CD8-positive, alpha-beta T cell (primary cell): ENCODE measurements at regions of chr19 and their contacts with region 1.

Region 1: GRCh38 chr19:23686621-23687423 is at the start of gene ZNF675:
- DNase-seq: peak; percentile 73 to 95 (median 89)
- ATAC-seq: peak; percentile 92
- H3K4me3 ChIP-seq: peak within 1 kb of the TSS; percentile 76 to 99
- H3K4me3 Mint-ChIP-seq: peak within 1 kb of the TSS; percentile 99
- H3K27ac ChIP-seq: peak within 1 kb of the TSS; percentile 90 to 93
- H3K27ac Mint-ChIP-seq: peak within 1 kb of the TSS; percentile 98
- H3K4me1 ChIP-seq: peaks cover 20% of the 10 kb centered on the region
- H3K4me1 Mint-ChIP-seq: peaks cover 52% of the 10 kb centered on the region
- H3K27me3 ChIP-seq: no peaks in the 10 kb centered on the region
- H3K27me3 Mint-ChIP-seq: no peaks in the 10 kb centered on the region
- CTCF ChIP-seq: no peak
- total RNA-seq, gene ZNF675: 19.5 to 20.5 TPM

Region 2: DNA sequence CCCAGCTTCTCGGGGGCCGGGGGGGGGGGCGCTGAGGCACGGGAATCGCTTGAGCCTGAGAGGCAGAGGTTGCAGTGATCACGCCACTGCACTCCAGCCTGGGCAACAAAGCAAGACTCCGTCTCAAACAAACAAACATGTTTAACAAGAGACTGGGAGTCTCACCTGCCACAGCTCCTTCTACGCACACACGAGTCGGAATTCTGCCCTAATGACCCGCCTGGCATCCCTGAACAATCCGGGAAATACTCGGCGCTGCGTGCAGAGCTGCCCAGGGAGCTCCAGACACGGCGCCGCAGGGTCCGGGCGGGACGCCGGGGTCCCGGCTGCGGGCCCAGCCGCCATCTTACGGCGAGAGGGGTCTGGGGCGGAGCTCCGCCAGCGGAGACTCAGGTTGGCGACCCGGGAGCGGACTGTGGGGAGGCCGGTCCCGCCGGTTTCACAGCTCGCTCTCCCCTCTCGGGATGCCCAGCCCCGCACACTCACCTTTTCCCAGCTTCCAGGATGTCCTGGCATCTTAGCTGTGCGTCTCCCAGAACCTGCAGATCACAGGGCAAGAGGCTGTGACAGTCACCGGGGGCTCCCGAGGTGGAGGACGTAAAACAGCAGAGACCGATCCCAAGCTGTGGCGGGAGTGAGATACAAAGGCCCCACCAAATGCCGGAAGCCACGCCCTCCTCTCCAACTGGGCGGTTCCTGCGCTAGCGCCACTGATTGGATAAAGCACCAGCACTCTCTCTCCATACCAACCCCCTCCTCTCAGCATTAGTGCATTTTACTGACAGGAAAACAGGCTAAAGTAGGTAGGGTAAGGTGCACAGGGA is 413.0 kb before region 1 on chr19:
- CTCF ChIA-PET with region 1: no interaction called
- POLR2A ChIA-PET with region 1: interaction called, 6 read pairs
- intact Hi-C with region 1: loop called (anchors 1 to 5 kb)
- DNase-seq: peak; percentile 80 to 95 (median 92)
- ATAC-seq: peak; percentile 98
- H3K4me3 ChIP-seq: peak overlapping the region; percentile 80 to 95
- H3K4me3 Mint-ChIP-seq: peak overlapping the region; percentile 98
- H3K27ac ChIP-seq: peak overlapping the region; percentile 78 to 83
- H3K27ac Mint-ChIP-seq: peak overlapping the region; percentile 97
- H3K4me1 ChIP-seq: peaks cover 8% of the 10 kb centered on the region
- H3K4me1 Mint-ChIP-seq: peaks cover 35% of the 10 kb centered on the region
- H3K27me3 ChIP-seq: no peaks in the 10 kb centered on the region
- H3K27me3 Mint-ChIP-seq: no peaks in the 10 kb centered on the region
- CTCF ChIP-seq: no peak

Region 3: GRCh38 chr19:23799321-23799720 is 112.5 kb after region 1 on chr19:
- CTCF ChIA-PET with region 1: no interaction called
- POLR2A ChIA-PET with region 1: interaction called, 4 read pairs
- intact Hi-C with region 1: loop called in 1 of 2 experiments (anchors 5 kb)
- DNase-seq: peak in 8 of 9 experiments; percentile 9 to 76 (median 46)
- ATAC-seq: peak; percentile 95
- H3K4me3 ChIP-seq: peak overlapping the region in 1 of 2 experiments; percentile 11
- H3K4me3 Mint-ChIP-seq: peak overlapping the region; percentile 81
- H3K27ac ChIP-seq: peak overlapping the region; percentile 45 to 57
- H3K27ac Mint-ChIP-seq: peak overlapping the region; percentile 88
- H3K4me1 ChIP-seq: peaks cover 24% of the 10 kb centered on the region
- H3K4me1 Mint-ChIP-seq: peaks cover 42% of the 10 kb centered on the region
- H3K27me3 ChIP-seq: no peaks in the 10 kb centered on the region
- H3K27me3 Mint-ChIP-seq: no peaks in the 10 kb centered on the region
- CTCF ChIP-seq: no peak

Region 4: GRCh38 chr19:24033301-24033962 is 346.6 kb after region 1 on chr19:
- CTCF ChIA-PET with region 1: no interaction called
- POLR2A ChIA-PET with region 1: interaction called, 9 read pairs
- intact Hi-C with region 1: loop called (anchors 2 to 5 kb)
- DNase-seq: peak; percentile 70 to 92 (median 84)
- ATAC-seq: peak; percentile 99
- H3K4me3 ChIP-seq: peak overlapping the region; percentile 99
- H3K4me3 Mint-ChIP-seq: peak overlapping the region; percentile 100
- H3K27ac ChIP-seq: peak overlapping the region; percentile 88 to 92
- H3K27ac Mint-ChIP-seq: peak overlapping the region; percentile 99
- H3K4me1 ChIP-seq: peaks cover 34% of the 10 kb centered on the region
- H3K4me1 Mint-ChIP-seq: peaks cover 48% of the 10 kb centered on the region
- H3K27me3 ChIP-seq: no peaks in the 10 kb centered on the region
- H3K27me3 Mint-ChIP-seq: no peaks in the 10 kb centered on the region
- CTCF ChIP-seq: no peak